Endothelial cell of umbilical vein (primary cell): ENCODE measurements at regions of chr12 and their contacts with region 1.

Region 1: GRCh38 chr12:107607464-107608392 is 77.9 kb upstream of the PWP1 start:
- DNase-seq: peak; percentile 62
- H3K4me3 ChIP-seq: no peak overlapping the region
- H3K27ac ChIP-seq: no peak overlapping the region
- H3K4me1 ChIP-seq: no peaks in the 10 kb centered on the region
- H3K27me3 ChIP-seq: no peaks in the 10 kb centered on the region
- CTCF ChIP-seq: peak; percentile 89 to 94
- POLR2A ChIP-seq: no peak

Region 2: GRCh38 chr12:107126796-107127481 is 480.8 kb before region 1 on chr12:
- CTCF ChIA-PET with region 1: interaction called, 296 read pairs
- POLR2A ChIA-PET with region 1: no interaction called
- dilution Hi-C with region 1: loop called (anchors 25 kb)
- intact Hi-C with region 1: loop called (anchors 1 kb)
- DNase-seq: peak; percentile 55
- H3K4me3 ChIP-seq: no peak overlapping the region
- H3K27ac ChIP-seq: no peak overlapping the region
- H3K4me1 ChIP-seq: no peaks in the 10 kb centered on the region
- H3K27me3 ChIP-seq: peaks cover 4 to 7% of the 10 kb centered on the region in 2 experiments
- CTCF ChIP-seq: peak; percentile 19 to 29
- POLR2A ChIP-seq: no peak

Region 3: GRCh38 chr12:107317751-107318613 is 289.7 kb before region 1 on chr12:
- CTCF ChIA-PET with region 1: no interaction called
- POLR2A ChIA-PET with region 1: no interaction called
- dilution Hi-C with region 1: no loop called
- intact Hi-C with region 1: loop called (anchors 1 kb)
- DNase-seq: peak; percentile 81
- H3K4me3 ChIP-seq: peak overlapping the region; percentile 29 to 41 (median 30)
- H3K27ac ChIP-seq: no peak overlapping the region
- H3K4me1 ChIP-seq: peaks cover 20% of the 10 kb centered on the region
- H3K27me3 ChIP-seq: peaks cover 36 to 48% of the 10 kb centered on the region in 2 experiments
- CTCF ChIP-seq: peak in 1 of 2 donors; percentile 1
- POLR2A ChIP-seq: no peak

Region 4: GRCh38 chr12:107402041-107403022 is 205.4 kb before region 1 on chr12:
- CTCF ChIA-PET with region 1: interaction called, 14 read pairs
- POLR2A ChIA-PET with region 1: no interaction called
- dilution Hi-C with region 1: no loop called
- intact Hi-C with region 1: loop called (anchors 2 kb)
- DNase-seq: peak; percentile 47
- H3K4me3 ChIP-seq: no peak overlapping the region
- H3K27ac ChIP-seq: no peak overlapping the region
- H3K4me1 ChIP-seq: no peaks in the 10 kb centered on the region
- H3K27me3 ChIP-seq: no peaks in the 10 kb centered on the region
- CTCF ChIP-seq: peak; percentile 50 to 72
- POLR2A ChIP-seq: no peak

Region 5: GRCh38 chr12:107448198-107448597 is 159.5 kb before region 1 on chr12:
- CTCF ChIA-PET with region 1: interaction called, 36 read pairs
- POLR2A ChIA-PET with region 1: no interaction called
- dilution Hi-C with region 1: no loop called
- intact Hi-C with region 1: loop called (anchors 1 kb)
- DNase-seq: no peak
- H3K4me3 ChIP-seq: no peak overlapping the region
- H3K27ac ChIP-seq: no peak overlapping the region
- H3K4me1 ChIP-seq: no peaks in the 10 kb centered on the region
- H3K27me3 ChIP-seq: no peaks in the 10 kb centered on the region
- CTCF ChIP-seq: peak; percentile 16 to 41
- POLR2A ChIP-seq: no peak

Region 6: GRCh38 chr12:107515446-107515958 is 92.2 kb before region 1 on chr12:
- CTCF ChIA-PET with region 1: interaction called, 3 read pairs
- POLR2A ChIA-PET with region 1: no interaction called
- dilution Hi-C with region 1: no loop called
- intact Hi-C with region 1: loop called (anchors 5 kb)
- DNase-seq: peak; percentile 73
- H3K4me3 ChIP-seq: no peak overlapping the region
- H3K27ac ChIP-seq: peak overlapping the region; percentile 54
- H3K4me1 ChIP-seq: peaks cover 15% of the 10 kb centered on the region
- H3K27me3 ChIP-seq: no peaks in the 10 kb centered on the region
- CTCF ChIP-seq: no peak
- POLR2A ChIP-seq: no peak

Region 7: GRCh38 chr12:107622005-107622404 is 14.3 kb after region 1 on chr12:
- CTCF ChIA-PET with region 1: interaction called, 13 read pairs
- POLR2A ChIA-PET with region 1: no interaction called
- dilution Hi-C with region 1: no loop called
- intact Hi-C with region 1: no loop called
- DNase-seq: no peak
- H3K4me3 ChIP-seq: no peak overlapping the region
- H3K27ac ChIP-seq: no peak overlapping the region
- H3K4me1 ChIP-seq: no peaks in the 10 kb centered on the region
- H3K27me3 ChIP-seq: no peaks in the 10 kb centered on the region
- CTCF ChIP-seq: peak; percentile 10 to 46
- POLR2A ChIP-seq: no peak

Region 8: GRCh38 chr12:107873223-107873622 is 265.5 kb after region 1 on chr12:
- CTCF ChIA-PET with region 1: no interaction called
- POLR2A ChIA-PET with region 1: no interaction called
- dilution Hi-C with region 1: no loop called
- intact Hi-C with region 1: no loop called
- DNase-seq: no peak
- H3K4me3 ChIP-seq: no peak overlapping the region
- H3K27ac ChIP-seq: no peak overlapping the region
- H3K4me1 ChIP-seq: no peaks in the 10 kb centered on the region
- H3K27me3 ChIP-seq: peaks cover 0 to 3% of the 10 kb centered on the region in 2 experiments
- CTCF ChIP-seq: no peak
- POLR2A ChIP-seq: no peak

Region 9: GRCh38 chr12:108180255-108181094 is 572.7 kb after region 1 on chr12:
- CTCF ChIA-PET with region 1: no interaction called
- POLR2A ChIA-PET with region 1: no interaction called
- dilution Hi-C with region 1: no loop called
- intact Hi-C with region 1: no loop called
- DNase-seq: no peak
- H3K4me3 ChIP-seq: no peak overlapping the region
- H3K27ac ChIP-seq: no peak overlapping the region
- H3K4me1 ChIP-seq: no peaks in the 10 kb centered on the region
- H3K27me3 ChIP-seq: no peaks in the 10 kb centered on the region
- CTCF ChIP-seq: no peak
- POLR2A ChIP-seq: no peak